Prostate gland (tissue), 2 donors: ENCODE measurements at regions of chr4 and their contacts with region 1.

Region 1: DNA sequence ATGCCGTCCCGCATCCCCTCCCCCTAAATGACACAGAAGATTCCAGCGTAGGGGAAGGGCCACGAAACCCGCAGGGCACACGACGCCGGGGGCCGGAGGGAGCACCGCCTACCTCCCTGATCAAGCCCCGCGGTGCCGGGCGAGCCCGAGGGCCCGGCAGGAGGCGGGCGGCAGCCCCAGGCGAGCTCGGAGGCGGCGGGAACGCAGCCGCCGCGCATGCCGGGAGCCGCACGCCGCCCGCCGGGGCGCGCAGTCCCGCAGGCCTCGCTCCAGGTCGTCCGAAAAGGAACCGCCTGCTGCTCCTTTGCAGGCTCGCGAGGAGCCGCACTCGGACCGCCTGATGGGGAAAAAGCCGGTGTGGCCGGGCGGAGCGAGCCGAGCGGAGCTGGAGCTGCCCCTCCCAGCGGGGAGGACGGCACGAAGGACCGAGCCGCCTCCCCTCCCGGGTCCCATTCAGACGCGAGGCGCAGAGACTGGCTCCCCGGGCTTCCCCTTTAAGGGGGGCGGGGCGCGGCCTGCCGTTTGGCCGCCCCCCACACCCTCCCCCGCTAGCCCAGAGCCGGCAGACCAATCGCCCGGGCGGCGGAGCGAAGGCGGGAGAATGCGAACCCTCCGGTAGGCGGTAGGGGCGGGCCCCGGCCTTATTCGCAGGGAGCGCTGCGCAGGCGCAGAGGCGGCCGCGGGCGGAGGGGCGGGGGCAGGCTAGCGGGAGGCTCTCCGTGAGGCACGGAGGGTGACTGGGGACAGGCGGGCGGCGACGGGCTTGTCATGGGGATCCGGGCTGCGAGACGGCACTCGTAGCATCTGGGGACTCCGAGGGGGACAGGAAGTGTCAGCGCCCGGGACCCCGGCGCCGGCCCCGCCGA is 561 bp upstream of the ING2 start:
- DNase-seq: peak; percentile 99
- H3K4me3 ChIP-seq: peak overlapping the region; percentile 90 to 99
- H3K27ac ChIP-seq: peak overlapping the region; percentile 98 to 99
- H3K4me1 ChIP-seq: no peaks in the 10 kb centered on the region
- H3K27me3 ChIP-seq: no peaks in the 10 kb centered on the region
- CTCF ChIP-seq: peak in 3 of 4 experiments; percentile 25 to 62 (median 51)
- POLR2A ChIP-seq: peak; percentile 70

Region 2: DNA sequence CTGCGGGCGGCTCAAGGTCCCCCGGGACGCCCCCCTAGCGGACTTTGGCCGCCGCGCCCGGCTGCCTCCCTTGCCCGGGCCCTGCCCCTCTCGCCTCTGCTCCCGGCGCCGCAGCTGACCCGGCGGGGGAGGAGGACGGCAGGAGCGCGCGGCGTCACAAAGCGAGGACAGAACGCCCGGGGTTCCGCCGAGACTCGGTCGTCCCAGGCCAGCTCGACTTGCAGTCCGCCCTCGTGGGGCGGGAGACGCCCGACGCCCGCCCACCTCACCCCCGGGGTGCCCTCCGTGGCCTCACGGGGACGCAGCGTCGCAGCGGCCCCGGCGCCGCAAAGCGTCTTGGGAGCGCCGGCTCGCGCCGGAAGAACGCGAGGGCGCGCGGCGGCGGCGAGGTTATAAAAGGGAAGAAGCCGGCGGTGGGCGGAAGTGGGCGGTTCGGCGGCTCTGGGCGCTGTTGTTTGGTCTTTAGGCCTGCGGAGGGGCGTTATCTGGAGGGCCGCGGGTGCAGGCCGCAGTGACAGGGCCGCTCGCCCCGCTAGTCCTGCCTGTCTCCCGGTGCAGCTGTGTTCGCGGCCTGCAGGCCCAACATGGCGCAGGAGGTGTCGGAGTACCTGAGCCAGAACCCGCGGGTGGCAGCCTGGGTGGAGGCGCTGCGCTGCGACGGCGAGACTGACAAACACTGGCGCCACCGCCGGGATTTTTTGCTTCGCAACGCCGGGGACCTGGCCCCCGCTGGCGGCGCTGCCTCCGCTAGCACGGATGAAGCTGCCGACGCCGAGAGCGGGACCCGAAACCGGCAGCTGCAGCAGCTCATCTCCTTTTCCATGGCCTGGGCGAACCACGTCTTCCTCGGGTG is 59.9 kb before region 1 on chr4 and contains the start of gene CDKN2AIP:
- intact Hi-C with region 1: loop called (anchors 1 kb)
- DNase-seq: peak; percentile 90
- H3K4me3 ChIP-seq: peak within 1 kb of the TSS; percentile 59 to 64
- H3K27ac ChIP-seq: peak within 1 kb of the TSS; percentile 94 to 96
- H3K4me1 ChIP-seq: peaks cover 10% of the 10 kb centered on the region
- H3K27me3 ChIP-seq: no peaks in the 10 kb centered on the region
- CTCF ChIP-seq: peak in 2 of 4 experiments; percentile 15 to 29
- POLR2A ChIP-seq: peak; percentile 95
- total RNA-seq, gene CDKN2AIP: 22.5 to 27.5 TPM

Region 3: DNA sequence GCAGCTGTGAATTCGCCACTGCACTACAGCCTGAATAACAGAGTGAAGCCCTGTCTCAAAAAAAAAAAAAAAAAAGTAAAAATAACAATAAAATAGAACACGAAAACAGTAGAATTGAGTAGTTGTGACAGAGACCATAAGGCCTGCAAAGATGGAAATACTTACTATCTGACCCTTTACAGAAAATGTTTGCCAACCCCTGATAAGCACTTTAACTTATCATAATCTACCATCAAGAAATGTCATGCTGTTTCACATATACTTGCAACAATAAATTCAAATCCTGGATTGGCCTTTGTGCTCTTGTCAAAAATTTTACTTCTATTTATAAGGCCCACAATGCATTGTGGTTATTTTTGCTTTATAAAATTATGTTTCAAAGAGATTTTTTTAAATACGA is 76.1 kb after region 1 on chr4:
- intact Hi-C with region 1: no loop called
- DNase-seq: no peak
- H3K4me3 ChIP-seq: no peak overlapping the region
- H3K27ac ChIP-seq: no peak overlapping the region
- H3K4me1 ChIP-seq: no peaks in the 10 kb centered on the region
- H3K27me3 ChIP-seq: no peaks in the 10 kb centered on the region
- CTCF ChIP-seq: no peak
- POLR2A ChIP-seq: no peak

Region 4: DNA sequence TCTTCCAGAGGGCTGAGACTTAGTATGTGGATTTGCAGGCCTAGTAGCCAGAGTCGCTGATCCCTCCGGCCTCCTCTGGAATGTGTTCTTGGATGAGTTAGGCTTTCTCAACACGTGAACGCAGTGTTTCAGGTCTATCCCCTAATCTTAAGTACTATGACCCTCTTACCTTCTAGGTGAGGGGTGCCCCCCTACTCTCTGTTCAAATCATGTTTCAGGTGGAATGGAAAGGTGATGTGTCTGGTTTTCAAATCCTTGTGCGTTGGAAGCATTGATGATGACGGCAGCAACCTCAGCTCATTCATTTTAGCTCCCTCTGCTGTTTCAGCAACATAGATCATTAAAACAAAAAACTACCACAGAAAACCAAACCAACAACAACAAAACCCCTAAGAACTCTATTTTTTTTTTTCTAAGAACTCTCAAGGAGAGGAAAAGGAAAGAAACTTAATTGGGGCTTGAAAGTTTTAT is 98.3 kb after region 1 on chr4:
- intact Hi-C with region 1: loop called (anchors 1 kb)
- DNase-seq: no peak
- H3K4me3 ChIP-seq: no peak overlapping the region
- H3K27ac ChIP-seq: no peak overlapping the region
- H3K4me1 ChIP-seq: no peaks in the 10 kb centered on the region
- H3K27me3 ChIP-seq: no peaks in the 10 kb centered on the region
- CTCF ChIP-seq: peak in 2 of 4 experiments; percentile 7 to 40
- POLR2A ChIP-seq: no peak

Region 5: GRCh38 chr4:183659029-183659871 is 155.0 kb after region 1 on chr4 and contains the starts of genes RWDD4 and TRAPPC11:
- intact Hi-C with region 1: loop called (anchors 2 kb)
- DNase-seq: peak; percentile 98
- H3K4me3 ChIP-seq: peak within 1 kb of the TSS; percentile 69 to 90
- H3K27ac ChIP-seq: peak within 1 kb of the TSS; percentile 88 to 93
- H3K4me1 ChIP-seq: no peaks in the 10 kb centered on the region
- H3K27me3 ChIP-seq: no peaks in the 10 kb centered on the region
- CTCF ChIP-seq: peak in 2 of 4 experiments; percentile 67 to 77
- POLR2A ChIP-seq: peak; percentile 91
- total RNA-seq, gene RWDD4: 24.4 to 27.6 TPM
- total RNA-seq, gene TRAPPC11: 27.6 to 34.5 TPM

Region 6: DNA sequence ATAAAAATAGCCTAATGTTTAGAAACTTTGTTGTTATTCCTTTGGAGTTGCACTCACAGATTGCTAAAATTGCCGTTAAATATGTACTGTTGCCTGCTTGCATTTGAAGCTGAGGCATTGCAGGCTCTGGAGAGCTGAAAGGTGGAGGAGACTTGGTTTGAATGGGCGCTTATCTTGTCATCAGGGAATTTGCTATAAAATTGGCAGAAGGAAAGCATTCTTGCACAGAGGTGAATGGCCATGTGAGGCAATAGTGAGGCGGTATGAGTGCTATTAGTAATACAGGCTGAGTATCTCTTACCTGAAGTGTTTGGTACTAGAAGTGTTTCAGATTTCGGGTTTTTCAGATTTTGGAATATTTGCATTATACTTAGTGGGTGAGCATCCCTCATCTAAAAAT is 196.1 kb after region 1 on chr4:
- intact Hi-C with region 1: no loop called
- DNase-seq: peak; percentile 48
- H3K4me3 ChIP-seq: no peak overlapping the region
- H3K27ac ChIP-seq: no peak overlapping the region
- H3K4me1 ChIP-seq: no peaks in the 10 kb centered on the region
- H3K27me3 ChIP-seq: no peaks in the 10 kb centered on the region
- CTCF ChIP-seq: peak in 1 of 4 experiments; percentile 22
- POLR2A ChIP-seq: no peak

Region 7: DNA sequence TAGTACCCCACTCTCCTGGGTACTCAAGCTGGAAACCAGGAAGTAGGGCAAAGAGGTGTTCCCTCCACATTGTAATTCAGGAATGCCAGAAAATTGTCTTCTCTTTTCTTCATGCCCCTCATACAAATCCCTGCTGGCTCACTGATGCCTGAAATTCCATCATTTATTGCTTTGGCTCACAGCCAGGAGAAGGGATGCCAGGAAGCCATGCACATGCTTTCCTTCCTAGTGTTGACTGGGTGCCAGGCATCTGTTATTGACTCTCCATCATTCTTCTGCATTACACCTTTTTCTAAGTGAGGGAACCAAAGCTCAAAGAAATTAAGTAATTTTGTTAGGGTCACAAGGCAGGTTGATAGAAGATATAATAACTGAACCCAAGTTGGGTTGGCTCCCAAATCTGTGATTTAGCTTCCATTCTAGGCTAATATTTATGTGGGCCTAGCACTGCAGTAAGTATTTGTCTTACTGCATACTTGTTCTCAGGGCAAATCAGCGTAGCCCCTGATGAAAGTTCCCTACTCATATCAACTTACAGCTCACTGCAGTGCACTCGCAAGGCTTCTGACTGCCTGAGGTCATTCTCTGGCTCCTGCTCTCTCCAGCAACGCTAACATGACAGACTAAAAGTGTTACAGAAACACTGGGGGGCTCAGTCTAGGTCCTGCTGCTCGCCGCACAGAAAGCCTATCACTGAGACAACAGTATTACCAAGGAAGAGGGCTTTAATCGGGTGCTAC is 243.8 kb after region 1 on chr4:
- intact Hi-C with region 1: no loop called
- DNase-seq: peak; percentile 53
- H3K4me3 ChIP-seq: no peak overlapping the region
- H3K27ac ChIP-seq: peak overlapping the region in 1 of 2 donors; percentile 26
- H3K4me1 ChIP-seq: no peaks in the 10 kb centered on the region
- H3K27me3 ChIP-seq: no peaks in the 10 kb centered on the region
- CTCF ChIP-seq: no peak
- POLR2A ChIP-seq: no peak

Region 8: DNA sequence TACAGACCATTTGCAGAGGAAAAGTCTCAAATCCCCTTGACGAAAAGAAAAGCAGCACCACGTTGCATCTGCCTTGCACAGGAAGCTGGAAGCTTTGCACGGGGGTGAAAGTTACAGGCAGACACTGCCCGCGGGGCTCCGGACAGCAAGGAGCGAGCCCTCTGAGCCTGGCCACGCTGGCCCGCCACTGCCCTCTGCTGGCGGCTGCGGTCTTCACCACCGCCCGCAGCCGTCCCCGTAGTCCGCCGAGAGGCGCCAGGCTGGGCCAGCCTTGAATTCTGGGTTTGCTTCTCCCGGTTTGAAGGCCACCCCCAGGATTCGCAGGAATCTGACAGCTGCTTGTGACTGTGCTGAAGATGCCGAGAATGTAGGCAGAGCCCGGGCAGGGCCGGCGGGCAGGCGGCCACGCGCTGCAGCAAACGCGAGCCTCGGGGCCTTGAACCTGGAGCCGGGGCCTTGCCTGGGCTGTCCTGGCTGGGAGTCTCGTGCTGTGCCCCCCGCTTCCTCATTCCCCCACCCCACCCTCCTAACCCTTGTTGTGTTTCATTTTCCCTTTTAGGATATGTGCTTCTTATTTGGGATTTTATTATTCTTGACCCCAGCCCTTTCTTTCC is 664.2 kb after region 1 on chr4:
- intact Hi-C with region 1: loop called (anchors 10 kb)
- DNase-seq: peak; percentile 41
- H3K4me3 ChIP-seq: no peak overlapping the region
- H3K27ac ChIP-seq: no peak overlapping the region
- H3K4me1 ChIP-seq: no peaks in the 10 kb centered on the region
- H3K27me3 ChIP-seq: no peaks in the 10 kb centered on the region
- CTCF ChIP-seq: peak; percentile 72 to 90 (median 90)
- POLR2A ChIP-seq: no peak